ENCODE measurements at regions of chr10 and their contacts with region 1.

Region 1: GRCh38 chr10:113441220-113441619 is 111.6 kb upstream of the HABP2 start:
- DNase-seq: no peak
- H3K4me3 Mint-ChIP-seq: no peak overlapping the region
- H3K27ac Mint-ChIP-seq: no peak overlapping the region
- H3K4me1 Mint-ChIP-seq: no peaks in the 10 kb centered on the region
- H3K27me3 Mint-ChIP-seq: no peaks in the 10 kb centered on the region

Region 2: GRCh38 chr10:112634096-112634830 is 807.0 kb before region 1 on chr10:
- intact Hi-C with region 1: no loop called
- DNase-seq: no peak
- H3K4me3 Mint-ChIP-seq: no peak overlapping the region
- H3K27ac Mint-ChIP-seq: no peak overlapping the region
- H3K4me1 Mint-ChIP-seq: no peaks in the 10 kb centered on the region
- H3K27me3 Mint-ChIP-seq: no peaks in the 10 kb centered on the region

Region 3: GRCh38 chr10:113397047-113397446 is 44.2 kb before region 1 on chr10:
- intact Hi-C with region 1: loop called (anchors 2 kb)
- DNase-seq: no peak
- H3K4me3 Mint-ChIP-seq: no peak overlapping the region
- H3K27ac Mint-ChIP-seq: no peak overlapping the region
- H3K4me1 Mint-ChIP-seq: no peaks in the 10 kb centered on the region
- H3K27me3 Mint-ChIP-seq: peaks cover 3% of the 10 kb centered on the region

Region 4: DNA sequence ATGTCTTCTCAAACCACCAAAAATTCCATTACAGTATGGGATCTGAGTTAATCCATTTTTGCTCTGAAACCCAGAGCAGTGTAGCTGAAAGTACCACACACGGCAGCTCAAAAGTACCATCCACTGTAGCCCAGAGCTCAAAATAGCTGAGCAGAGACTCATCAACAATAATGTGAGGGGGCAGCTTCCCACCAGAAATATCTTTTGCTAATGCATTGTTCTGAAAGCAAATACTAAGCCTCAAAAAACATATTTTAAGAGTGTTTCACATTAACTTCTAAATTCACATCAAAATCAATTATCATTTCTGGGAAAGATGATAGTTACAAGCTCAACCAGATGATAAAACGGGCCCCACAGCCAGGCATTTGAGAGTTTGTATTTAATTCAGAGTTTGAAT is 1143.2 kb after region 1 on chr10:
- intact Hi-C with region 1: no loop called
- DNase-seq: no peak
- H3K4me3 Mint-ChIP-seq: no peak overlapping the region
- H3K27ac Mint-ChIP-seq: no peak overlapping the region
- H3K4me1 Mint-ChIP-seq: no peaks in the 10 kb centered on the region
- H3K27me3 Mint-ChIP-seq: peaks cover 23% of the 10 kb centered on the region